HepG2 (cell line): ENCODE measurements at regions of chr2 and their contacts with region 1.

Region 1: DNA sequence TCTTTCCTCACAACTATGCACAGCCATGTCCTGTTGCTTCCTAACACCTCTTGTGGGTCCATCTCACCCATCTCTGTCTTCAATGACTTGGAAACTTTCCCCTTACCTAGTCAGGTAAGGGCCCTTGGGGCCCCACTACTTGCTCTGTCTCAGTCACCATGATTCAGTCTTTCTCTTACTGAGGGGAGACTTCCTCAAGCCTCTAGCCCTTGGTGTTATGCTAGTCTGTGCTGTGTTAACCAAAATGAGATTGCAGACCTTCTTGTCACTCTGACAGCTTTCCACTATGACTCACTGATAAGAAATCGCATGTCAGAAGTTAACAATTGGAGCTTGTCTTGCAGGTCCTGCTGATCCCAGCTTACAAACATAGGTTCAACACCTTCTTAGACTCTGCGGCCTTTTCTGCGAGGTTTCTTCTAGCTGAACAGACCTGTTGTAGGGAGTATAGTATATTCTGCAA is 65.3 kb downstream of the WDR75 start:
- DNase-seq: peak; percentile 87
- ATAC-seq: peak; percentile 89
- H3K4me3 ChIP-seq: no peak overlapping the region
- H3K27ac ChIP-seq: no peak overlapping the region
- H3K4me1 ChIP-seq: peaks cover 41% of the 10 kb centered on the region
- H3K27me3 ChIP-seq: no peaks in the 10 kb centered on the region
- CTCF ChIP-seq: no peak
- EP300 ChIP-seq: peak in 1 of 2 experiments; percentile 65; a peak in 2 of 4 replicates
- POLR2A ChIP-seq: no peak
- RAD21 ChIP-seq: no peak

Region 2: GRCh38 chr2:189534854-189535832 is 28.6 kb after region 1 on chr2:
- CTCF ChIA-PET with region 1: no interaction called
- POLR2A ChIA-PET with region 1: no interaction called
- in situ Hi-C with region 1: no loop called
- intact Hi-C with region 1: no loop called
- DNase-seq: peak; percentile 53
- ATAC-seq: peak; percentile 52
- H3K4me3 ChIP-seq: no peak overlapping the region
- H3K27ac ChIP-seq: no peak overlapping the region
- H3K4me1 ChIP-seq: peaks cover 32% of the 10 kb centered on the region
- H3K27me3 ChIP-seq: no peaks in the 10 kb centered on the region
- CTCF ChIP-seq: no peak
- EP300 ChIP-seq: peak in 1 of 2 experiments; percentile 57; a peak in 1 of 4 replicates
- POLR2A ChIP-seq: no peak
- RAD21 ChIP-seq: no peak

Region 3: DNA sequence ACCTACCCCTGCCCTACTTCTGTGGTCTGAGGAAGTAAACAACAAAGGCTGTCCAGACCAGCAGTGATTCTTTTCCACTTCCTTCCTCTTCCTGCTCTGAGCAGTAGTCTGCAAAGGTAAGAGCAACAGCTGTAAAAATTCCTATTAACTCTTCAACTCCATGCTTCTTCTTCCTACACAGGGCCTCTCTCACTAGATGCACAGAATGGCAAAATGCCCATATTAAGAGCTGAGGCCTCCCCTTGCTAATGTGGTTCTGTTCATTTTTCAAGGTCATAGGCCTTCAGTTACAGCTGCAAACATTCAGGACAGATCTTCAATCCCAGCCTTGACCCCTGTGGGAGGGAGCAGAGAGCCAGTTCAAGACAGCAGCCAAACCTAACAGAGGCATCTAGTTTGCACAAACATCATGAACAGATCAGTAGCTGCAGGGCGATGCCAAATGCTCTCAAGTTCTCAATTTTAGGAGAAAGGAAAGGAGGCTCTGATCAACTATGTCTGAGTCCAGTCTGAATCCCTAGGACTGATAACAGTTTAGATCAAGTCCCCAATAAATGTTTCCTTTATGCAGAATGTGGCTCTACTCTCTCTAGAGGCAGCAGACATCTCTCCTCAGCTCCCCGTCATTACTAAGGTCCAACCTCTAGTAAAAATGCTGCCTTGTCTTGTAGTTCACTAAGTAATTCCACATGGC is 53.2 kb after region 1 on chr2:
- CTCF ChIA-PET with region 1: no interaction called
- POLR2A ChIA-PET with region 1: interaction called, 3 read pairs
- in situ Hi-C with region 1: no loop called
- intact Hi-C with region 1: loop called (anchors 5 kb)
- DNase-seq: no peak
- ATAC-seq: peak; percentile 78
- H3K4me3 ChIP-seq: no peak overlapping the region
- H3K27ac ChIP-seq: peak overlapping the region; percentile 34
- H3K4me1 ChIP-seq: peaks cover 56% of the 10 kb centered on the region
- H3K27me3 ChIP-seq: no peaks in the 10 kb centered on the region
- CTCF ChIP-seq: no peak
- EP300 ChIP-seq: no peak; a peak in 1 of 4 replicates
- POLR2A ChIP-seq: no peak
- RAD21 ChIP-seq: no peak